ENCODE measurements at regions of chr10 and their contacts with region 1.

Region 1: DNA sequence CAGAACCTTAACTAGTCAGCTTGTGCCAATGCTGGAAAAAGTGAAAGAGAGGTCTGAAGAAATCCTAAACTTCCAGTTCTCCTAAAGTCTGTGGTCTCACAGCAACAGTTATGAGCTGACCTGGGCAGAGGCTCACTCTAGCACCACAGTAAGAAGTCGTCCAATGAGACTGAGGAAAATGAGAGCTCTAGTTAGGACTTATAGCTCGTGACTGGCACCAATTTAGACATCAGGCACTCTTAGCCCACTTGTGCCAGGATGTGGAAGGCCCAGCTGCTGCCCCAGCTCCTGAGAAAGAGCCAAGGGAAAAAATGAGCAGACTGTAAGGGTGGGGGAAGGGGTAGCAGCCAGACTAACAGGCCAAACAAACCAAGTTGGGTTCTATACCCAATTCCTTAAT is 7.6 kb downstream of the MMS19 start:
- DNase-seq: no peak
- ATAC-seq: no peak; the same call in 1 of the 2 replicates
- H3K4me3 ChIP-seq: no peak overlapping the region
- H3K27ac ChIP-seq: peak overlapping the region; percentile 11; the same call in 1 of the 2 replicates
- H3K4me1 ChIP-seq: peaks cover 22% of the 10 kb centered on the region
- H3K27me3 ChIP-seq: no peaks in the 10 kb centered on the region
- CTCF ChIP-seq: no peak

Region 2: DNA sequence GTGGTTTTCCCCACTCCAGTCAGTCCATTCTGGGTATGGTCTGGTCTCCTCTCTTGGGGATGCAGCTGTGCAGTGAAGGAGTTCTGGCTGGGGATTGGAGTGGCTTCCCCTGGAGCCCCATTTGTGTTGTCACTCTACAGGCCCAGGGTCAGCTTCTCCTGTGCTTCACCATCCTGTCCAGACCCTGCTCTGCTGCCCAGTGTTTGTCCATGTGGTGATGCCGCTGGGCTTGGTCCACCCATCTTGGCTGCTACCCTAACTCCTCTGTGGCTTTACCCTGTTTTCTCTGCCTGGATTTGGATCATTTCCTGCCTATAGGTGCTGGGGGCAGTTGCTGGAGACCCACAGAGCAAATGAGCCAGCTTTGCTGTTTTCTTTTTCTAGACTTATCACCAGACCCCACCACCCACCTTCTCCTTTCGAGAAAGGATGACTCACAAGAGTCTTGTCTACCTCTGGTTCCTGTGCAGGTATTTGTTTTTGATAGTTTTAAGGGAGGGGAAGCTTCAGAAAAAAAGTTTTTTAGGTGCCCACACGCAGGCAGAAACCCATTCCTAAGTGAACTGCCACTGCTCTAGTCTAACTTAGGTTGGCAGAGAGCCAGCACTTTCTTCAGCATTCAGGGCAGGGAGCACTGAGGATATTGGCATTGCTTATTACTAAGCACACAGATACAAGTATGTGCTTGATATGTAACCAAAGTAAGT is 36.1 kb before region 1 on chr10:
- CTCF ChIA-PET with region 1: no interaction called
- POLR2A ChIA-PET with region 1: no interaction called
- in situ Hi-C with region 1: no loop called
- intact Hi-C with region 1: no loop called
- DNase-seq: no peak
- ATAC-seq: peak; percentile 9; the same call in 1 of the 2 replicates
- H3K4me3 ChIP-seq: no peak overlapping the region
- H3K27ac ChIP-seq: no peak overlapping the region
- H3K4me1 ChIP-seq: no peaks in the 10 kb centered on the region
- H3K27me3 ChIP-seq: no peaks in the 10 kb centered on the region
- CTCF ChIP-seq: no peak

Region 3: DNA sequence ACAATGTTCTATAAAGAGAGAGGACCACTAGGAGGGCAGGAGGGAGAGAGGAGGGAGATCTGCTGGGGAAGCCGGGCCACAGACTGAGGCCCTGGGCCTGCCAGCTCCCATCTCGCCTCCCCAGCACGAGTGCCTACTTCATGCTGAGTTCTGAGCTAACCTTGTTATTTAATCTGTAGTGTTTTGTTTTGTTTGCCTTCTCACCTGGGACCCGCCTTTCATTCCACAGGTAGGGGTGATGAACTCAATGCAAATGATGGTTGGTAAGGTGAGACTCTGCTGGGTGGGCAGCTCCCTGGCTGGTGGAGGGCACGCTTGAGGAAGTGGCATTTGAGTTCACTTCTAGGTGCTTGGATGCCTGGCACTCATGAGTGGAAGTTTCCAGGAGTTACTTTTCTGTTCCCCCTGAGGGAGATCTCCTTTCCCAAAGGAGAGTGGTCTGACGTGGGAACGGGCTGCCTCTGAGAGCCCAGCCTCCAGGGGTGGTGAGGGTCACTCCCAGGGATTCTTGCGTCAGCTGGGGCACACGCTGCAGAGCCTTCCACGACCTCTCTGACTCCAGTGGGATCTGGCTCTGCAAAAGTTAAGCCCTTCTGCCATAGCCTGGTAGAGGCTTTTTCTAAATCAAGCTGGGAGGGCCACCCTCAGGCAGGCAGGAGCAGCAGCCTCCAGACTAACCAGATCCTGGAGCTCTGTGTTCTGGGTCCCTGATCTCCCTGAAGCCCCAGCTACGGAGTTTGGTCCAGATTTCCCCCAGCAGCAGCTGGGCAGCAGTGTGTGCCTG is 30.6 kb after region 1 on chr10:
- CTCF ChIA-PET with region 1: no interaction called
- POLR2A ChIA-PET with region 1: interaction called, 10 read pairs
- in situ Hi-C with region 1: no loop called
- intact Hi-C with region 1: no loop called
- DNase-seq: no peak
- ATAC-seq: no peak
- H3K4me3 ChIP-seq: no peak overlapping the region
- H3K27ac ChIP-seq: no peak overlapping the region
- H3K4me1 ChIP-seq: peaks cover 17% of the 10 kb centered on the region
- H3K27me3 ChIP-seq: no peaks in the 10 kb centered on the region
- CTCF ChIP-seq: no peak

Measured in Panc1 (cell line).